SK-N-SH (cell line): ENCODE measurements at regions of chr18 and their contacts with region 1.

Region 1: DNA sequence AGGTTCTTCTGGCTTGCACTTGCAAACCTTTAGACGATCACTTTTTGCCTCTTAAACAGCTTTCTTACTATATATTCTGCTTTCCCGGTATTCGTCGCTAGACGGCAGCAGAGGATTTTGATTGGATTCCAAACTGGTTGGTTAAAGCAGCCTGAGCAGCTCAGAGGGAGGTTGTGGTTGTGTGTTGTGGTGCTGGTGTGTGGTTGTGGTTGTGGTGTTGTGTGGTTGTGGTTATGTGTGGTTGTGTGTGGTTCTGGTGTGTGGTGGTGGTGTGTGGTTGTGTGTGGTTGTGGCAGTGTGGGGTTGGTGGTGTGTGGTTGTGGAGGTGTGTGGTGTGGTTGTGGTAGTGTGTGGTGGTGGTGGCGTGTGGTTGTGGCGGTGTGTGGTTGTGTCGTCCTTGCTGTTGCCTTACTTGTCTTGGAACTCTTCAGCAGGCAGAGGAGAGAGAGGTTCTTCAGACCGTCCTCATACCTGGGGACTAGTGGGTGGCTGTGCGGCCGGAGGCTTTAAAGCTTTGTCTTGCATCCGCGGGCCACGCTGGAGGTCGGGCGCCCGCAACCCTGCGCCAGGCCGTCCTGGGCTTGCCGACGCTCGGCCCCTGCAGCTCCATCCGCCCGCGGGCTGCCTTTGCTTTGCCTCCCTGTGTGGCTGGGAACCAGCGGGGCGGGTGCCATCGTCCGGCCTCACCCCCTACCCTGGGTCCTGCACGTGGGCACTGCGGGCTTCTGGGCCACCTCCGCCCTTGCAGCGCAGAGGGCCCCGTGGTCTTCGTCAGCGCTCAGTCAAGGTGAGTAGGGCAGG is 190.8 kb downstream of the ARHGAP28 start:
- DNase-seq: peak; percentile 67
- H3K4me3 ChIP-seq: no peak overlapping the region; a peak in 1 of 4 replicates
- H3K27ac ChIP-seq: no peak overlapping the region
- H3K4me1 ChIP-seq: peaks cover 0 to 5% of the 10 kb centered on the region in 2 experiments; a peak in 1 of 4 replicates
- H3K27me3 ChIP-seq: no peaks in the 10 kb centered on the region
- CTCF ChIP-seq: peak; percentile 54
- EP300 ChIP-seq: no peak
- RAD21 ChIP-seq: peak; percentile 92

Region 2: DNA sequence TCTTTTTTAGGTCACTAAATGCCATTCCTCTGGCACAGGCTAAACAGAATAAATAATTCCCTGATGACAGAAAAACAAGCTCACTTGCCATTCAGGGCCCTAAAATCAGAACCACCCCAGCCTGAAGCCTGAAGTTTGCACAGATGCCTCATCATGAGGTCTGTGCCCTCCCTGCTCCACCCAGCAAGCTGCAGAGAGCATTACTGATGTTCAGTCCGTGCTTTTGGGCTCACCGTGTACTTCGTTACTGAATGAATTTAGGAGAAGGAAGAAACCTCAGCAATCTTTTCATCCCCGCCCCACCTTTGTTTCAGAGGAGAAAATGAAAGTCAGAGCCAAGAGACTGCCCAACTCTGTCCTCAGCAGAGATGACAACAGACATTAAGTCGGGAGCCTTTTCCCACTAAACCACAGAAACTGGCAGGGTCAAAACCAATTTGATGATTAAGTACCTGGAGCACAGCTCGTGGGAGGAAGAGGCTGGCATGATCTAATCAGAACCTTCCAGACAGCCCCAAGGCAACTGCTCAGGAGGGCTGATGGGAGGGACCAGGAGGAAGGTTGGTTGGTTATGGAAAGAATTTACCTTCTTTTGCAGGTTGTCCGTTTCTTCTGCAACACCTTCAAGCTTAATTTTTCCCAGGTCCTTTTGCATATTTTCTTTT is 74.6 kb after region 1 on chr18:
- CTCF ChIA-PET with region 1: interaction called, 40 read pairs
- POLR2A ChIA-PET with region 1: no interaction called
- DNase-seq: peak; percentile 22
- H3K4me3 ChIP-seq: no peak overlapping the region
- H3K27ac ChIP-seq: no peak overlapping the region; a peak in 1 of 4 replicates
- H3K4me1 ChIP-seq: peaks cover 0 to 9% of the 10 kb centered on the region in 2 experiments; a peak in 2 of 4 replicates
- H3K27me3 ChIP-seq: no peaks in the 10 kb centered on the region
- CTCF ChIP-seq: no peak
- EP300 ChIP-seq: no peak
- RAD21 ChIP-seq: no peak

Region 3: DNA sequence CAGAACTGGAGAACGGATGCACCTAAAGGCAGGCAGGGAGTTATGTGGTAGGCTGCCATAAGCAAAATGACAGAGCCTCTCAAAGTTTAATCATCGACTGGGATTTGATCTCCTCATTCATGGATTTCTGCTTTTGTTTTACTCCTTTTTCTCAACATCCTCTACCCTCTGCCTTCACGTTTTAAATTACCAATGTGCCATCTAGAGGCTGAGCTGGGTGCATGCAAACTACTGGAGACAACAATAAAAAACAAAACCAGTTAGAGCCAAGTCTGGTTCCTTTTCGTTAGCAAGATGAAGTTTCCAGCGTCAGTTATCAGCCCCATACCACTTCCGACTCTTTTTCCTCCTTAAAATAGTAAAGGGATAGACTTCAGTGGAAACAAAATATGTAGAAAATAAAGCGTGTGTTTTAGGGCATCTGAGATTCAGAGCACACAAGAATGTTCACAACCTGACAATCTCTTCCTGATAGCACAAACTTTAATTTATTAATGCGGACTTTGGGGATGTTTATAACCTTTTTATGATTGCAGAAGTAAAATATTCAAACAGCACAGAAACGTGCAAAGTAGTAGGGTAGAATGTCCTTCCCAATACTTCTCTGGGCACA is 80.3 kb after region 1 on chr18:
- CTCF ChIA-PET with region 1: interaction called, 40 read pairs
- POLR2A ChIA-PET with region 1: no interaction called
- DNase-seq: peak; percentile 59
- H3K4me3 ChIP-seq: no peak overlapping the region
- H3K27ac ChIP-seq: no peak overlapping the region
- H3K4me1 ChIP-seq: no peaks in the 10 kb centered on the region; a peak in 2 of 4 replicates
- H3K27me3 ChIP-seq: no peaks in the 10 kb centered on the region
- CTCF ChIP-seq: peak; percentile 51
- EP300 ChIP-seq: no peak
- RAD21 ChIP-seq: peak; percentile 86

Region 4: DNA sequence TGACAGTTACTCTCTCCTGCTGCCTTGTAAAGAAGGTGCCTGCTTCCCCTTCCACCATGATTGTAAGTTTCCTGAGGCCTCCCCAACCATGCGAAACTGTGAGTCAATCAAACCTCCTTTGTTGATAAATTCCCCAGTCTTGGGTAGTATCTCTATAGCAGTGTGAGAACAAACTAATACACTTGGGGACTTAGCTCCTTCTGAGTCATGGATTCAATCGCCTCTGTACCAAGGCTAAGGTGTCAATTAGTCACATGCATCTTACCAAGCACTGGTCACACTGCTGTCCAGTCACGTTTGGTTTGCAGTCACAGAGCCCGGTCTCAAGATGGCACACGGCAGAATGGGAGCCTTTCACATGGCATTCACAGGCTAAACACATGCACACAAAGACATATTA is 96.7 kb after region 1 on chr18:
- CTCF ChIA-PET with region 1: interaction called, 54 read pairs
- POLR2A ChIA-PET with region 1: no interaction called
- DNase-seq: no peak
- H3K4me3 ChIP-seq: no peak overlapping the region
- H3K27ac ChIP-seq: no peak overlapping the region
- H3K4me1 ChIP-seq: no peaks in the 10 kb centered on the region
- H3K27me3 ChIP-seq: no peaks in the 10 kb centered on the region
- CTCF ChIP-seq: no peak
- EP300 ChIP-seq: no peak
- RAD21 ChIP-seq: no peak

Region 5: DNA sequence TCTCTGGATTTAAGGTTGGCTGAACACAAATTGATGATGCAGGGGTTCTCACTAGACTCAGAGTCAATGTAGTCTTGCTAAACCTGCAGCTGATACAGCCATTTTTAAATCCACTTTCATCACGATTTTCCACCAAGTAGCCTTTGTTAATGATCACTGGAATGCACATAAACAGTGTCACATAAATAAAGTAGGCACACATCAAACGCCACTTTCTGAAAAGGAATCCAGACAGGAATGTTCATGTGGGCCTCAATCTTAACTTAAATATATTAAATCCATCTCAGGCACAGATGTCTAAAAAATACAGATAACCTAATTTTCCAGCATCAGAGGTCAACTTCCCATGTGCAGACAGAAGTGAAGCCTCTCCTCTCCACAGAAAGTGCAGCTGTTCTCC is 139.0 kb after region 1 on chr18:
- CTCF ChIA-PET with region 1: no interaction called
- POLR2A ChIA-PET with region 1: no interaction called
- DNase-seq: peak; percentile 17
- H3K4me3 ChIP-seq: no peak overlapping the region
- H3K27ac ChIP-seq: no peak overlapping the region
- H3K4me1 ChIP-seq: no peaks in the 10 kb centered on the region
- H3K27me3 ChIP-seq: no peaks in the 10 kb centered on the region
- CTCF ChIP-seq: no peak
- EP300 ChIP-seq: no peak
- RAD21 ChIP-seq: no peak